AG04449 (cell line): ENCODE measurements at regions of chr16 and their contacts with region 1.

Region 1: DNA sequence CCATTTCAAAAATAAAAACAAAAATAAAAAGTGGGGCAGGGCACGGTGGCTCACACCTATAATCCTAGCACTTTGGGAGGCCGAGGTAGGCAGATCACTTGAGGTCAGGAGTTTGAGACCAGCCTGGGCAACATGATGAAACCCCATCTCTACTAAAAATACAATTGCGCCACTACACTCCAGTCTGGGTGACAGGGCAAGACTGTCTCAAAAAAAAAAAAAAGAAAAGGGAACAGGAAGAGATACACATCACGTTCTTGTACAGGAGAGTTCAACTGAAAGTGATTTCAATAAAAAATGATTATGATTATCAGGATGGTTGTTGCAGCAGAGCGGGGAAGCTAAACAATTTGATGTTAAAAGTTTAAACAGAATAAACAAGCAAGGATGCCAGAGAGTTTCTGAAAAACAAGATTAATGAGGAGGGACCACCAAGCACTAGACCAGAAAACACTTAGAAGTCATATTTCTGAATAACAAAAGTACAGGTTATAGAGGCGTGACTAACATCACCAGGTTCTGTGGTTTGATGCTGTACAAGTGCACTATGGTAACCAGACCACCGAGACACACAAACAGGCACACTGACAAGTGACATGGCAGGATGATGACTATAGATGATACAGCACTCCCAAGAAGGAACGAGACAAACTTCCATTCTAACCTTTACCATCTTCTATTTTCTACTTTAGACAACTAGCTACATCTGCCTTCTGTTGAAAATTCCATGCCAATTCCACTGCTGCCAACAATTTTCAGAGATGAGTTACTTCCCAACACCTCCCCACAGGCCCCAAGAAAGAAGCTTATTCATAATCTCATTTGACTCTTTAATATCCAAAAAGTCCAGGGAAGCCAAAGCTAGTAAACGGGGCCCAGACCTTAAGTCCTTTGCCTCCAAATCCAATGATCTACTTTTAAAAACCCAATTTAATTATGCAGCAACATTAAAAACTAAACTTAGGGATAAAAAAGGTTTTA is 11.8 kb downstream of the DNAJA2 start:
- DNase-seq: no peak
- H3K4me3 ChIP-seq: no peak overlapping the region
- CTCF ChIP-seq: no peak

Region 2: DNA sequence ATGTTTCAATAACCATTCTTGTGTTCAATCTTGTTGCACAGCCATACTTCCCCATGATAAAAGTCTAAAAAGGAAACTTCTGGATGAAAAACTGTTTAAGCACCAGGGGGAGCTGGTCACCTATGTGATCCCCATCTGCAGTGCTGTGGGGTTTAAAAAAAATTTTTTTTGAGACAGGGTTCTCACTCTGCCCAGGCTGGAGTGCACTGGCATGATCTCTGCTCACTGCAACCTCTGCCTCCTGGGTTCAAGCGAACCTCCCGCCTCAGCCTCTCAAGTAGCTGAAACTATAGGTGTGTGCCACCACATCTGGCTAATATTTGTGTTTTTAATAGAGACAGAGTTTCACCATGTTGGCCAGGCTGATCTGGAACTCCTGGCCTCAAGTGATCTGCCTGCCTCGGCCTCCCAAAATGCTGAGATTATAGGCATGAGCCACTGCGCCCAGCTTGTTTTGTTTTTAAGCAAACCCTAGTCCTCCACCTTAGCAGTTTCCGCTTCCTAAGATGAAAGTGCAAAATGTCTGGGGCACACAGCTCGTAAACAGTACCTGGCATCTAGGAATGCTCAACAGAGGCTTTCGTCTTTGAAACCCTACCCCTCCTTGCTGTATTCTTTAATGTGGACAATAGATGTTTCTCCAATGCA is 13.6 kb before region 1 on chr16:
- CTCF ChIA-PET with region 1: interaction called, 22 read pairs
- POLR2A ChIA-PET with region 1: no interaction called
- DNase-seq: no peak
- H3K4me3 ChIP-seq: no peak overlapping the region
- CTCF ChIP-seq: peak; percentile 47